ENCODE measurements at regions of chr13 and their contacts with region 1.

Region 1: DNA sequence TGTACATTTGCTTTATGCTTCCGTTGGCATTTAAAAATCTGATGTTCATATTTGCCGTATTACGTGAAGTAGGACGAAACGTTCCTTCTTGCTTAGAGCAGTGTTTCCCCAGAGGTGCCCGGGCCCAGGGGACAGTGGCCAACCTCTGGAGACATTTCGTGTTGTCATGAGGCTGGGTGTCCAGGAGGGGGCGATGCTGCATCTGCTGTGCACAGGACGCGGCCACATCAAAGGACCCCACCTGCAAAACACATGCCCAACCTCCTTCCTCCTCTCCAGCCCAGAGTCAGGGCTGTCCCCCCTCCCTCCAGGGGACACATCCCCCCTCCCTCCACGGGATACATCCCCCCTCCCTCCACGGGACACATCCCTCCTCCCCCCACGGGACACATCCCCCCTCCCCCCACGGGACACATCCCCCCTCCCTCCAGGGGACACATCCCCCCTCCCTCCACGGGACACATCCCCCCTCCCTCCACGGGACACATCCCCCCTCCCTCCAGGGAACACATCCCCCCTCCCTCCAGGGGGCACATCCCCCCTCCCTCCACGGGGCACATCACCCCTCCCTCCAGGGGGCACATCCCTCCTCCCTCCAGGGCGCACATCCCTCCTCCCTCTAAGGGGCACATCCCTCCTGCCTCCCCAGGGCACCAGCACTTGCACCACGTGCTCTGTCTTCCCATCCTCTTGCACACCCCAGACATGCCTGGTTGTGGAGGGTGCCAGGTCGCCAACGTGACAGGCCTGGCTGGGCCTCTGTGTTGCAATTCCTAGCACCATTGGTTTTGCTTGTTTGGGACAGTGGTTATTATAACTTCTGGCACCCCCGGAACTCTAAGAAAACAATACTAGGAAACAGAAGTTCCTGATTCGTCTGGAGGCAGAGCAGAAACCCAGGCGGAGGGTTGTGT is 46.7 kb downstream of the GAS6 start:
- DNase-seq: peak; percentile 95 to 97
- H3K4me3 ChIP-seq: no peak overlapping the region
- H3K27ac ChIP-seq: peak overlapping the region in 4 of 5 donors; percentile 41 to 62 (median 56)
- H3K4me1 ChIP-seq: peaks cover 17 to 57% (median 43%) of the 10 kb centered on the region in 4 donors
- H3K27me3 ChIP-seq: peaks cover 0 to 8% (median 0%) of the 10 kb centered on the region in 3 donors
- CTCF ChIP-seq: peak in 5 of 7 experiments; percentile 72 to 90 (median 87)
- EP300 ChIP-seq: no peak
- POLR2A ChIP-seq: no peak

Region 2: GRCh38 chr13:113296842-113297369 is 520.3 kb before region 1 on chr13 and contains the start of gene LAMP1:
- intact Hi-C with region 1: no loop called
- DNase-seq: peak; percentile 99
- H3K4me3 ChIP-seq: peak within 1 kb of the TSS; percentile 77 to 99 (median 93)
- H3K27ac ChIP-seq: peak within 1 kb of the TSS; percentile 74 to 89 (median 86)
- H3K4me1 ChIP-seq: peaks cover 15 to 51% (median 42%) of the 10 kb centered on the region in 4 donors
- H3K27me3 ChIP-seq: peaks cover 0 to 8% (median 0%) of the 10 kb centered on the region in 3 donors
- CTCF ChIP-seq: peak in 1 of 7 experiments; percentile 15
- EP300 ChIP-seq: peak; percentile 65
- POLR2A ChIP-seq: peak in 1 of 4 donors; percentile 19
- total RNA-seq, gene LAMP1: 44.0 to 121 (median 70.3) TPM

Region 3: GRCh38 chr13:113904411-113904810 is 87.2 kb after region 1 on chr13:
- intact Hi-C with region 1: loop called (anchors 10 kb)
- DNase-seq: peak; percentile 54 to 67
- H3K4me3 ChIP-seq: no peak overlapping the region
- H3K27ac ChIP-seq: peak overlapping the region in 2 of 5 donors; percentile 36 to 50
- H3K4me1 ChIP-seq: peaks cover 6 to 19% (median 11%) of the 10 kb centered on the region in 4 donors
- H3K27me3 ChIP-seq: peaks cover 0 to 12% (median 0%) of the 10 kb centered on the region in 3 donors
- CTCF ChIP-seq: peak in 5 of 7 experiments; percentile 32 to 81 (median 65)
- EP300 ChIP-seq: no peak
- POLR2A ChIP-seq: no peak

Region 4: DNA sequence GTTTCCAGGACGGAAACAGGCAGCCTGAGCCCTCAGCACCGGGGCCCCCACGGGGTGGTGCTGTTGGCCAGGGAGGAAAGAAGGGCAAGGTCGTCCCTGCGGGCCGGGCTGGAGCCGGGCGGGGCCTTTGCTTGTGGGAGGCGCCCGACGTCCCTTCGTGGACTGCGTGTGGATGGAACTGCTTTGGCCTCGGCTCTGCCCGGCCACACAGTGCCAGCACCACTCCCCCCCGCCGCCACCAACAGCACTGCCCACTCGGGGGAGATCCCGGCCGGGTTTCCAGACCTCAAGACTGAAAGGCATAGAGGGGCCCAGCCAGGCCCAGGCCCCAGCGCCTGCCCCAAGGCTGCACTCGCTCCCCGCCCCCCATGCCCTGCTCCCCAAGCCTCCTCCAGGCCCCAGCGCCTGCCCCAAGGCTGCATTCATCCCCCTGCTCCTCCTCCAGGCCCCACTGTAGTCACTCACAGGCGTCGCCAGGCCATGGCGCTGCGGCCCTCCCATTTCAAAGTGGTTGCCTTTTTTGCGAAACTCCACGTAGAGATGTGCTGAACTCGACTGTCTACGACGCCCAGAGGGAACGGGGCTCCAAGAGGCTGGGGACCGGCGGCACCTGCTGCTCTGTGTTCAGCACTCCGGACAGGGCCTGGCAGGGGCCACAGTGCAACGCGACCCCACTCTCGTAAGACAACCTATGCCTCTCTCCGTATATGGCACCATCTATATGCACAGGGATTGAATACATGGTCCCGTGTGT is 134.2 kb after region 1 on chr13:
- intact Hi-C with region 1: loop called (anchors 10 kb)
- DNase-seq: peak; percentile 90 to 92
- H3K4me3 ChIP-seq: peak overlapping the region in 3 of 4 donors; percentile 3 to 21 (median 14)
- H3K27ac ChIP-seq: peak overlapping the region in 1 of 5 donors; percentile 41
- H3K4me1 ChIP-seq: peaks cover 10 to 28% (median 26%) of the 10 kb centered on the region in 4 donors
- H3K27me3 ChIP-seq: no peaks in the 10 kb centered on the region
- CTCF ChIP-seq: peak in 5 of 7 experiments; percentile 69 to 95 (median 86)
- EP300 ChIP-seq: no peak
- POLR2A ChIP-seq: no peak

Region 5: DNA sequence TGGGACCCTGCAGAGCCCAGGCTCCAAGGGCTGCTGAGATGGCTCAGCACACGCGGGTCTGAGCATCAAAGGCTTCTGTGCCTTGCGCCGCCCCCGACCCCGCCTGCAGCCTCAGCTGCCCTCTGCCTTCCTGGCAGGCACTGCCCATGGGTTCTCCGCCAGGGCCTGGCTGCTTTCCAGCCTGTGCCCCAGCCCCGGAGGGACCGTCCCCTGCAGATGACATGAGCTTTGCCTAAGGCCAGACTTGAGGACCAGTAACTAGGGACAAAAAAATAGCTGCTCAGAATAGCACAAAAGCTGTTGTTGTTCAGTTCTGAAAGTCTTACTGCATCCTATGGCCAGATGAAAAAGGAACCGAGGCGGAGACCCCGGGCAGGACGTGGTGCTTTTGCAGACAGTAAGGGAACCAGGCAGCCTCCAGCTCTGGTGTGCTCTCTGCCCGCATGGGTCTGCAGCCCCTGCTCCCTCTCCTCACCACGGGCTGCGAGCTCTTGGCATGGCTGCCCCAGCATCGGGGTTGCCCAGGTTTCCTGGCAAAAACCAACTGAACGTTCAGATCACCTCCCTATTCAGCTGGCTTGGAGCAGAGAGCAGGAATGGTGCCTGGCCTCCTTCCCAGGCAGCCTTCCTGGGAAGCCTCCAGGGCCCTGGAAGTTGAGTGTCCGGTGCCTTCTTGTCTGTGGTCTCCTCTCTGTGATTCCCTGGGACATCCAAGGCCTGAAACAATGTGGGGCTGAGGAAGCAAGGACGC is 349.4 kb after region 1 on chr13:
- intact Hi-C with region 1: no loop called
- DNase-seq: peak in 1 of 2 donors; percentile 32
- H3K4me3 ChIP-seq: no peak overlapping the region
- H3K27ac ChIP-seq: peak overlapping the region in 2 of 5 donors; percentile 3 to 42
- H3K4me1 ChIP-seq: peaks cover 4 to 30% (median 22%) of the 10 kb centered on the region in 4 donors
- H3K27me3 ChIP-seq: peaks cover 0 to 46% (median 0%) of the 10 kb centered on the region in 3 donors
- CTCF ChIP-seq: no peak
- EP300 ChIP-seq: no peak
- POLR2A ChIP-seq: no peak